ENCODE measurements at regions of chr9 and their contacts with region 1.

Region 1: GRCh38 chr9:37565661-37566618 is 10.2 kb downstream of the FBXO10 start:
- DNase-seq: peak; percentile 77
- ATAC-seq: peak; percentile 84
- H3K4me3 ChIP-seq: peak overlapping the region; percentile 57
- H3K27ac ChIP-seq: peak overlapping the region; percentile 95
- H3K4me1 ChIP-seq: peaks cover 53% of the 10 kb centered on the region
- H3K27me3 ChIP-seq: no peaks in the 10 kb centered on the region
- CTCF ChIP-seq: no peak
- EP300 ChIP-seq: no peak
- POLR2A ChIP-seq: peak; percentile 54
- RAD21 ChIP-seq: no peak

Region 2: DNA sequence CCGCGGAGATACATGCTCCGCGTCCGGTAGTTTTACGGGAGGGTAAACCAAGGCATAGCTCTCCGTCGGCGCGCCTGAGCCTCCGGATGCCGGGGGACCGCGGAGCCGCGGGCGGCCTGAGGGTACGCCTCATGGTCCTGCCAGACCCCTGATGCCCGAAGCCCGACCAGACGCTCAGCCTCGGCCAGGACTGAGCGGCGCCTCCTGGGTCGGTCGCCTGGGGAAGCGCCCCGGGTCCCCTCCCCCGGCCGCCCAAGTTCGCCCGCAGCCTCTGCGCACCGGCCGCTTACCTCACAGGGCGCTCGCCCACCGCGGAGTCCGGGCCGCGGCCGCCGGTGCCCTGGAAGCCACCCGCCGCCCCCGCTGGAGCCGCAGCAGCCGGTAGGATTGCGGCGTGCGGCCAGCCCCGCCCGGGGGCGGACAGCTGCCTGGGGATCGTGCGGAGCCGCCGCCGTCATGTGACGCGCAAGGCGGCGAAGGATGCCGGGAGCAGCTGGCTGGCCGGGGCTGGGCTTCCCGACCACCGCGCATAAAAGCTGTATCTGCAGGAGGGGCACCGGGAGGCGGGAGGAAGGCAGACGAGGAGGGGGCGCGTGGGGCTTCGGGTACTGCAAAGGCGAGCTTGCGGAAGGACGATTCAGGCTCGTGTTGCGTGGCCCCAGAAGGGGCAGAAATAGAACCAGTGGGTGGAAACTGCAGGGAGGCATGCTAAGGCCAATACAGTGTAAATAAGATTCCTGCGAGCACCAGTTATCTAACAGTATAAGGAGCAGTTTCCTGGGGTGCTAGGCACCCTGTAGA is 10.2 kb after region 1 on chr9 and contains the start of gene FBXO10:
- CTCF ChIA-PET with region 1: interaction called, 18 read pairs
- POLR2A ChIA-PET with region 1: interaction called, 21 read pairs
- RAD21 ChIA-PET with region 1: interaction called, 20 read pairs
- SMC1A ChIA-PET with region 1: interaction called, 26 read pairs
- in situ Hi-C with region 1: no loop called
- intact Hi-C with region 1: no loop called
- DNase-seq: no peak
- ATAC-seq: peak; percentile 87
- H3K4me3 ChIP-seq: peak within 1 kb of the TSS; percentile 89
- H3K27ac ChIP-seq: peak within 1 kb of the TSS; percentile 78
- H3K4me1 ChIP-seq: peaks cover 5% of the 10 kb centered on the region
- H3K27me3 ChIP-seq: no peaks in the 10 kb centered on the region
- CTCF ChIP-seq: no peak
- EP300 ChIP-seq: 0 out of 4 replicates have a peak, but pooled peaks of 1 of the 2 experiments have one; percentile 6
- POLR2A ChIP-seq: peak; percentile 74
- RAD21 ChIP-seq: 0 out of 2 replicates have a peak, but pooled peaks have one; percentile 6
- polyA plus RNA-seq, gene FBXO10: 1.6 to 1.9 TPM

Region 3: DNA sequence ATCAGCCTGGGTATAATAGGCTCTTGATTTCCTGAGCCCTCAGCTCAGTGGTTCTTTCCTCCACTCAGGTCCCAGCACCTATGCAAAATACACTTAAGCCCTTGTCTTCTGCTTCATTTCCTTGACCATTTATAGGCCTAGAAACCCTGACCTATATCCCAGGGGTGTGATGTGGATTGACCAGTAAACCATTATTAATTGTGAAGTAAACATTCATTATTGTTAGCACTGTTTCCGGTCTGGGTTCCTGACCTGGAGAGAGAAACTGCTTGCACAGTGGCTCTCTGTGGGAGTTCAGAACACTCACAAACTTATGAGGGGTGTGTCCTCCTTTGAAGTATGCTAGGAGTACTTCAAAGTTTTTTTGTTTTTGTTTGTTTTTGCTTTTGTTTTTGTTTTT is 46.0 kb after region 1 on chr9:
- CTCF ChIA-PET with region 1: no interaction called
- POLR2A ChIA-PET with region 1: no interaction called
- RAD21 ChIA-PET with region 1: no interaction called
- SMC1A ChIA-PET with region 1: no interaction called
- in situ Hi-C with region 1: no loop called
- intact Hi-C with region 1: no loop called
- DNase-seq: no peak
- ATAC-seq: no peak
- H3K4me3 ChIP-seq: no peak overlapping the region
- H3K27ac ChIP-seq: no peak overlapping the region
- H3K4me1 ChIP-seq: no peaks in the 10 kb centered on the region
- H3K27me3 ChIP-seq: peaks cover 4% of the 10 kb centered on the region in 2 experiments; a peak in 3 of 4 replicates
- CTCF ChIP-seq: no peak
- EP300 ChIP-seq: no peak
- POLR2A ChIP-seq: no peak
- RAD21 ChIP-seq: no peak

Region 4: DNA sequence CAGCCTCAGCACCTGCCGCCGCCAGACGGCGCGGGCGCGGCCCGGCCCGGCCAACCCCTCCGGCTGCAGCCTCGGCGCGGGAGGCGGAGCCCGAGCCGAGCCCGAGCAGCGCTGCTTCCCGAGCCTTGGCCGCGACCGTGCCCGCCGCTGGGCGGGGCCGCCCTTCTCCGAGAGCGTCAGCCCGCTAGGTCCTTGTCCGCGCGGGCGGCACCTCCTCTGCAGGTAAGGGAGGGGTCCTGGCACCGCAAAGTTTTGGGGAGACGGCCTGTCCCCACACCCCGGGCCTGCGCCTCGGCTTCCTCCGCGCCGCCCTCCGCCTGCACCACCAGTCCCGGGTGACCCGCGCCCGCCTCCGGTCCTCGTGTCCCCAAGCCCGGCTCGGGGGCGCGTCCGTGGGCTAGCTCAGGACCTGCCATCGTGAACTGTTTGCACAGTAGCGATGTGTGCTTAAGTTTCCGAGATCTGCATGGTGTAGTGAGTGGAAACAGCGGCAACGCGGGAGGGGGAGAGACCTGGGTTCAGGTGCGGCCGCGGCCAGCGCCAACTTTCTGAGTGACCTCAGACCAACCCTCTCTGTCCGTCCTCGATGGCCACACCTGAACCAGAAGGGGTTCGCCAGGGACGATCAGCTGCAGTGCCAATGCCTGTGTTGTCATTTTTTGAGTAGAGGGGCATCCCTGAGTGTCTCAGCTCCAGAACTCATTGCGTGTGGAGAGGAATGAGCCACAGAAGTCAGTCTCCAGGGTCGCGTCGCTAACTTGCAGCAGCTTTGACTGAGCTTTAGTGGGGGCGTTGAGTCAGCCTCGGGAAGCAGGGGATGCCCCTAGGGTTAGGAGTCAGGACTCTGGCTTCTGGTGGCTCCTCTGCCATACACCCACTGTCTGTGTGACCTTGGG is 85.2 kb after region 1 on chr9 and contains the start of gene FRMPD1:
- CTCF ChIA-PET with region 1: no interaction called
- POLR2A ChIA-PET with region 1: interaction called, 11 read pairs
- RAD21 ChIA-PET with region 1: no interaction called
- SMC1A ChIA-PET with region 1: no interaction called
- in situ Hi-C with region 1: no loop called
- intact Hi-C with region 1: no loop called
- DNase-seq: no peak
- ATAC-seq: peak; percentile 98
- H3K4me3 ChIP-seq: peak within 1 kb of the TSS; percentile 62
- H3K27ac ChIP-seq: no peak within 1 kb of the TSS
- H3K4me1 ChIP-seq: no peaks in the 10 kb centered on the region
- H3K27me3 ChIP-seq: peaks cover 20 to 26% of the 10 kb centered on the region in 2 experiments
- CTCF ChIP-seq: no peak
- EP300 ChIP-seq: no peak
- POLR2A ChIP-seq: no peak
- RAD21 ChIP-seq: no peak
- polyA plus RNA-seq, gene FRMPD1: not detected

Region 5: DNA sequence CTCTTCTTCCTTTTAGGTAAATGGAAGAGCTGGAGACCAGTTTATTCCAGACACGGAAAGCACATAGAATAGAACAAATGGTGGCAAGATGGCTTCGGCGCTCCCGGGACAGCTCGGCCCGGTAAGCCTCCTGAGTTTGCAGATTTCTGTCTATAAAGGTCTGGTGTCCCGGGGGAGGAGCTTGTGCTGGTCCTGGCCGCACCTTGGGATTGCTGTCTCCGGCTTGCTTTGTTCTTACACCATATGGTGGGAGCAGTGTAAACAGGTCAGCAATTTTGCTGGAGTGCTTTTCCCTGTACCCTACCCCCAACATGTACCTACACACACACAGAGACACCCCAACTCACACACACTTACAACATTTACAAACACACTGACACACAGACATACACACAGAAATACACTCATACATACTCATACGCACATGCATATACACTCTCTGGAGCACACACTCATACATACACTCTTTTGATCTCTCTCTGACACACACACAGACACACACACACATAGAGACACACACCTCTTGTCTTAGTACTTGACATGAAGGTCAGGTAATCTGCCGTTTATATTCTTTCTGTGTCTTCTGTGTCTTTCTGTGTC is 126.8 kb after region 1 on chr9:
- CTCF ChIA-PET with region 1: no interaction called
- POLR2A ChIA-PET with region 1: no interaction called
- RAD21 ChIA-PET with region 1: no interaction called
- SMC1A ChIA-PET with region 1: no interaction called
- in situ Hi-C with region 1: no loop called
- intact Hi-C with region 1: no loop called
- DNase-seq: no peak
- ATAC-seq: no peak
- H3K4me3 ChIP-seq: no peak overlapping the region
- H3K27ac ChIP-seq: no peak overlapping the region
- H3K4me1 ChIP-seq: no peaks in the 10 kb centered on the region
- H3K27me3 ChIP-seq: peaks cover 1 to 3% of the 10 kb centered on the region in 2 experiments; a peak in 2 of 4 replicates
- CTCF ChIP-seq: no peak
- EP300 ChIP-seq: no peak
- POLR2A ChIP-seq: no peak
- RAD21 ChIP-seq: no peak

Measured in GM12878 (cell line).